ENCODE measurements at regions of chr14 and their contacts with region 1.

Region 1: DNA sequence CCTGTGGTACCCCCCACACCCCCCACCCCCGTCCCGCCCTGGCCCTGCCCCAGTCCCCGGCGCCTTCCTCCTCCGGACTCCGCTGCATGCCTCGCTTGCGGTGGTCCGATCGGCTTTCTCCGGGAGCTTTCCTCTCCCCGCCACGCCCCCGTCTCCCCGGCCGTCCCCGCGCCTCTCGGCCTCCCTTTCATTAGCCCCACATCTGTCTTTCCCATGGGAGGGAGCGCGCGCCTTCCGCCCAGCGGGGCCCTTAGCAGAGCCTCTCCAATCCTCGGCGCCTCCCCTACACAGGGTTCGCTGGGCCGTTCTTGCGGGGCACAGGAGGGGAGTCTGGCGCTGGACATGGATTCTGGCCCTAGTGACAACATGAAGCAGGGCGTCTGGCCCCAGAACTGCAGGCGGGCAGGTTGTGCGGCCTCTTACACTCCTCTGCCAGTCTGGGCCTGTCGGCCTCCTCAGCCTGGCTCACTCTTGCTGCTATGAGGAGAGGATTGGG is 1.5 kb upstream of the EFS start:
- DNase-seq: peak; percentile 73 to 79
- ATAC-seq: peak; percentile 33 to 81 (median 58)
- H3K4me3 ChIP-seq: peak overlapping the region in 9 of 10 donors; percentile 50 to 63 (median 59)
- H3K27ac ChIP-seq: peak overlapping the region; percentile 50 to 90 (median 86)
- H3K4me1 ChIP-seq: peaks cover 0 to 22% (median 5%) of the 10 kb centered on the region in 9 donors
- H3K27me3 ChIP-seq: peaks cover 0 to 45% (median 18%) of the 10 kb centered on the region in 7 donors
- CTCF ChIP-seq: no peak

Region 2: GRCh38 chr14:23258256-23258655 is 108.2 kb before region 1 on chr14:
- intact Hi-C with region 1: loop called in 3 of 10 experiments (anchors 5 to 10 kb)
- DNase-seq: no peak
- ATAC-seq: no peak
- H3K4me3 ChIP-seq: no peak overlapping the region
- H3K27ac ChIP-seq: no peak overlapping the region
- H3K4me1 ChIP-seq: no peaks in the 10 kb centered on the region
- H3K27me3 ChIP-seq: peaks cover 0 to 21% (median 12%) of the 10 kb centered on the region in 7 donors
- CTCF ChIP-seq: no peak

Region 3: DNA sequence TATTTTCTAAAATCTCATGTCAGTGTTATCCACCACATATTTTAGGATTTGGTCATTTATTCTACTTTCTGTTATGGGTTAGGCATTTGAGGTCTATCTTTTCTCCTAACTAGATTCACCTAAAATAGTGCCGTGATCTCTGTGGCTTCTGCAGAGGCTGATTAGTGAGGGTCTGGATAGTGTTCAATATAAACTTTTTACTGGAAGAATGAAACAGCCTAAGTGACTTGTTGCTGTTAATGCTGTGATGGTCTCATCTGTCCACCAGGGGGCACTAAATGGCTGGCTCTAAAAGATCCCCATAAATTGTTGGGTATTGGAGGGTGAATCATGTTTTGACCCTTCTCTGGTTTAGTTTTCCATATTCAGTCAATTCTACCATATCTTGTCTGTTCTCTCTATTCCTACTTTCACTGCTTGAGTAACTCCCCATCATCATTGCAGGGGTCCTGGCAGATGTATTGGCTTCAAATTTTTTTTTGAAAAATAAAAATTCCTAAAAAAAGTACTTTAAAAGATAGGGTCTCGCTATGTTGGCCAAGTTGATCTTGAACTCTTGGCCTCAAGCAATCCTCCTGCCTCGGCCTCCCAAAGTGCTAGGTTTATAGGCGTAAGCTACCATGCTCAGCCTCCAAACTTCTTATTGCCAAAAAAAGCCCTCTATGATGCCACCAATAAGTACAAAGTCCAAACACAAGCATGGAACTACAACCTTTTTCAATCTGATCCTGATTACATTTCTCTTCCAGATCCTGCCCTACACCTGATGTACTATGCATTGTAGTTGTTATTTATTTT is 38.3 kb before region 1 on chr14:
- intact Hi-C with region 1: loop called in 1 of 10 experiments (anchors 5 kb)
- DNase-seq: peak in 1 of 2 donors; percentile 73
- ATAC-seq: peak in 7 of 8 donors; percentile 55 to 78 (median 68)
- H3K4me3 ChIP-seq: no peak overlapping the region
- H3K27ac ChIP-seq: no peak overlapping the region
- H3K4me1 ChIP-seq: peaks cover 0 to 10% (median 6%) of the 10 kb centered on the region in 9 donors
- H3K27me3 ChIP-seq: peaks cover 0 to 1% (median 0%) of the 10 kb centered on the region in 7 donors
- CTCF ChIP-seq: peak; percentile 80 to 94 (median 88)

Region 4: DNA sequence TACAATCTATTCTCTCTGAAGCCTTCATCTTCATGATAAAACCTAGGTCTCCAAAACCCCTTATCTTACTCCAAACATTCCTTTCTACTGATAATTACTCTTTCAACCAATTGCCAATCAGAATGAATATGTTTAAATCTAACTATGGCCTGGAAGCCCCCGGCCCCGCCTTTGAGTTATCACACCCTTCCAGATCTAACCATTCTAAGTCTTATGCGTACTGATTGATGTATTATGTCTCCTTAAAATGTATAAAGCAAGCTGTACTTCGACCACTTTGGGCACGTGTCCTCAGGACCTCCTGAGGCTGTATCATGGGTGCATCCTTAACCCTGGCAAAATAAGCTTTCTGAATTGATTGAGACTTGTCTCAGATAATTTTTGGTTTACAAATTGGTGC is 30.9 kb before region 1 on chr14:
- intact Hi-C with region 1: loop called in 1 of 10 experiments (anchors 5 kb)
- DNase-seq: no peak
- ATAC-seq: no peak
- H3K4me3 ChIP-seq: no peak overlapping the region
- H3K27ac ChIP-seq: no peak overlapping the region
- H3K4me1 ChIP-seq: no peaks in the 10 kb centered on the region
- H3K27me3 ChIP-seq: peaks cover 0 to 8% (median 0%) of the 10 kb centered on the region in 7 donors
- CTCF ChIP-seq: no peak

Measured in heart right ventricle (tissue), 16 donors.